ENCODE measurements at regions of chr10 and their contacts with region 1.

Region 1: GRCh38 chr10:118241229-118242137 is 100.6 kb downstream of the FAM204A start:
- DNase-seq: peak; percentile 16 to 63 (median 43)
- ATAC-seq: peak; percentile 45
- H3K4me3 ChIP-seq: no peak overlapping the region
- H3K4me3 Mint-ChIP-seq: no peak overlapping the region
- H3K27ac ChIP-seq: no peak overlapping the region
- H3K27ac Mint-ChIP-seq: no peak overlapping the region
- H3K4me1 ChIP-seq: no peaks in the 10 kb centered on the region
- H3K4me1 Mint-ChIP-seq: peaks cover 0 to 6% (median 0%) of the 10 kb centered on the region in 7 donors
- H3K27me3 ChIP-seq: no peaks in the 10 kb centered on the region
- H3K27me3 Mint-ChIP-seq: peaks cover 38 to 67% (median 52%) of the 10 kb centered on the region in 5 donors

Region 2: DNA sequence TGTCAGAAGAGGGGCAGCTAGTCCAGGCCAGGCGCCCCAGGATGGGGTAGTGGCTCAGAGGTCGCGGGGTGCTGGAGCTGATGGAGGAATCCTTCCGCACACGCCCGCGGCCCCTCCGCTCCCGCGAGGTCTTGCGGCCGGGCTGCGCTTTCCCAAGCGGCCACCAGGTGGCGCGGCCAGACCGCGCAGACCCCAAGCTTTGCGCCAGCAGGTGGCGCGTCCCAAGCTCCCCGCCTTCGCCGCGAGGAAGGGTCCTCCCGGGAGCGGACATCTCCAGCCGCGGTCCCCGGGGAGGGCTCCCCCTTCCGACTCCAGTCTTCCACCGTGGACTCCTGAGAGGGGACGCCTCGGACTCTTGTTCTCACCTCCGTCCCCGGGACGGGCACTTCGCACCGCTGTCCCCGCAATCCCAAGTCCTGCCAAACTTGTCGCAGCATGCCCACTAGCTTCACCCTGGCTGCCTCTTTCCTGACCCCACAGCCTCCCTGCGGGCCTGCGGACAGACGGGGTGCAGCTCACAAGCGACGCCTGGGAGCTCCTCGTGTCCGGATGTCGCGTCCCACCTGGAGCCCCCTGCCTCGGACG is 1024.8 kb before region 1 on chr10:
- CTCF ChIA-PET with region 1: interaction called, 3 read pairs
- POLR2A ChIA-PET with region 1: no interaction called
- intact Hi-C with region 1: loop called (anchors 1 to 5 kb)
- DNase-seq: peak; percentile 27 to 81 (median 64)
- ATAC-seq: peak; percentile 92
- H3K4me3 ChIP-seq: peak overlapping the region; percentile 62
- H3K4me3 Mint-ChIP-seq: peak overlapping the region; percentile 71 to 86 (median 80)
- H3K27ac ChIP-seq: no peak overlapping the region
- H3K27ac Mint-ChIP-seq: no peak overlapping the region
- H3K4me1 ChIP-seq: peaks cover 6 to 10% of the 10 kb centered on the region in 2 donors
- H3K4me1 Mint-ChIP-seq: peaks cover 0 to 9% (median 7%) of the 10 kb centered on the region in 7 donors
- H3K27me3 ChIP-seq: peaks cover 3 to 6% of the 10 kb centered on the region in 2 donors
- H3K27me3 Mint-ChIP-seq: peaks cover 21 to 45% (median 37%) of the 10 kb centered on the region in 5 donors

Region 3: DNA sequence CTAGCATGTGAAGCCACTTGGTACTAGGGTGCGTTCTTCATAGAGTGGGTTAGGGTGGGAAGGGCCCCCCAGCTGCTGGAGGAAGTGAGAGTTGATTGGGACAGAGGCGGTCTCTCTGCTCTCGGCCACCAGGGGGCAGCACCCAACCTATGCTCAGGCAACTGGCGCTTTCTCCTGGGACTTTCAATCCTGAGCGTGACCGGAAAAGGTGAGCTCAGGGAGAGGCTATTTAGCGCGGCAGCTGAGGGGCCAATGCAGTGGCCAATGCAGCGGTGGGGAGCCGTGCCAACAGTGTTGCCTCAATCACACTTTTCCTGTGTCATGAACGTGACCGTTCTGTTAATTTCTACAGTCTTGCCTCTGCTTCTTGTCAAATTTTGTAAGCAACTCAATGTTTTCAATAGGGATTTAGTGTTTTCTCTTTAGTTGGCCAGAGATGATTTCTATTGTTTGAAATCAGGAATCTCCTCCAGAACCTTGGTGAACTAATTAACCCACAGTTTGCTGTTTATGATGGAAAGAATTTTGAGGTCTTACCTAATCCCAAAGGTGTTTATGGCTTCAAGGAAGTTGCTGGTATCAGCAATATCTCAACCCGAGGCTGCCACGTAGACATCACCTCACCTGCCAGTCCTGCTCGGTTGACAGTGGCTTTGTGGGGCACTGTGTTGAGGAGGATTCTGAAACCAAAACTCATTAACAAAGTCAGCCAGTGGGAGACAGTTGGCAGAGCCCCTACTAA is 798.4 kb before region 1 on chr10:
- CTCF ChIA-PET with region 1: no interaction called
- POLR2A ChIA-PET with region 1: no interaction called
- intact Hi-C with region 1: loop called in 1 of 2 experiments (anchors 1 kb)
- DNase-seq: peak in 8 of 9 donors; percentile 5 to 52 (median 26)
- ATAC-seq: peak; percentile 77
- H3K4me3 ChIP-seq: no peak overlapping the region
- H3K4me3 Mint-ChIP-seq: peak overlapping the region in 4 of 10 donors; percentile 20 to 60 (median 50)
- H3K27ac ChIP-seq: no peak overlapping the region
- H3K27ac Mint-ChIP-seq: no peak overlapping the region
- H3K4me1 ChIP-seq: no peaks in the 10 kb centered on the region
- H3K4me1 Mint-ChIP-seq: peaks cover 0 to 4% (median 0%) of the 10 kb centered on the region in 7 donors
- H3K27me3 ChIP-seq: no peaks in the 10 kb centered on the region
- H3K27me3 Mint-ChIP-seq: peaks cover 0 to 43% (median 40%) of the 10 kb centered on the region in 5 donors

Region 4: GRCh38 chr10:117860823-117861222 is 380.7 kb before region 1 on chr10:
- CTCF ChIA-PET with region 1: no interaction called
- POLR2A ChIA-PET with region 1: no interaction called
- intact Hi-C with region 1: loop called in 1 of 2 experiments (anchors 1 kb)
- DNase-seq: no peak
- ATAC-seq: no peak
- H3K4me3 ChIP-seq: no peak overlapping the region
- H3K4me3 Mint-ChIP-seq: no peak overlapping the region
- H3K27ac ChIP-seq: no peak overlapping the region
- H3K27ac Mint-ChIP-seq: no peak overlapping the region
- H3K4me1 ChIP-seq: no peaks in the 10 kb centered on the region
- H3K4me1 Mint-ChIP-seq: no peaks in the 10 kb centered on the region
- H3K27me3 ChIP-seq: no peaks in the 10 kb centered on the region
- H3K27me3 Mint-ChIP-seq: peaks cover 12 to 26% (median 16%) of the 10 kb centered on the region in 5 donors

Region 5: DNA sequence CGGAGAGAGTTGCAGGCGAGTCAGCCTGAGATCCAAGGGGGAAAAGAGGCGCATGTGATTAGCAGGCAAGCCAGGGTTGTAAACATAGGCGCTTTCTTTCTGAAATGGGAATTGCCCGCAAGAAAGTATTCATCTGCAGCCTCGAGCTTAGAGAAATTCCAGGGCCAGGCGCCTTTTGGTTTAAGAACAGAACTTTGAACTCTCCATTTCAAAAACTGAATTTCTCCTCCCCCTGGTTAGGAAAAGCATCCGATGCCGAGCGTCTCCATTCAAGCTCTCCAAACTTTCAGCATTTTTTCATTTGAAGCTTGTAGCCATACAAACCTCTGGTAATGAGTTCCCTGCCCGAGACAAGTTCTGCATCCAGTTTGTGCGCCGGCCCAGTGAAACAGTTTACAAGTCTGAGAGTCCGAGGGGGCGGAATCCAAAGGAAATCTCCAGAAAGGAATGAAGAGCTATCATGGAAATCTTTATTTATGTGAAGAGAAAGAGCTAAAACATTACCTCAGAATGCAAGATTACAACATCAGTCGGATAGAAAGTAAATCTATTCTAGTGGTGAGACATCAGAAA is 30.8 kb after region 1 on chr10:
- CTCF ChIA-PET with region 1: no interaction called
- POLR2A ChIA-PET with region 1: no interaction called
- intact Hi-C with region 1: no loop called
- DNase-seq: no peak
- ATAC-seq: no peak
- H3K4me3 ChIP-seq: no peak overlapping the region
- H3K4me3 Mint-ChIP-seq: no peak overlapping the region
- H3K27ac ChIP-seq: no peak overlapping the region
- H3K27ac Mint-ChIP-seq: no peak overlapping the region
- H3K4me1 ChIP-seq: no peaks in the 10 kb centered on the region
- H3K4me1 Mint-ChIP-seq: no peaks in the 10 kb centered on the region
- H3K27me3 ChIP-seq: no peaks in the 10 kb centered on the region
- H3K27me3 Mint-ChIP-seq: peaks cover 23 to 40% (median 38%) of the 10 kb centered on the region in 5 donors